ENCODE measurements at regions of chr4 and their contacts with region 1.

Region 1: GRCh38 chr4:44760142-44760898 is 34.0 kb upstream of the GNPDA2 start:
- DNase-seq: peak; percentile 26
- H3K4me3 ChIP-seq: no peak overlapping the region
- H3K27ac ChIP-seq: no peak overlapping the region
- H3K4me1 ChIP-seq: no peaks in the 10 kb centered on the region
- H3K27me3 ChIP-seq: no peaks in the 10 kb centered on the region
- CTCF ChIP-seq: peak; percentile 10 to 20
- POLR2A ChIP-seq: no peak

Region 2: GRCh38 chr4:44132526-44132925 is 627.8 kb before region 1 on chr4:
- CTCF ChIA-PET with region 1: no interaction called
- POLR2A ChIA-PET with region 1: no interaction called
- dilution Hi-C with region 1: no loop called
- intact Hi-C with region 1: no loop called
- DNase-seq: no peak
- H3K4me3 ChIP-seq: no peak overlapping the region
- H3K27ac ChIP-seq: no peak overlapping the region
- H3K4me1 ChIP-seq: no peaks in the 10 kb centered on the region
- H3K27me3 ChIP-seq: no peaks in the 10 kb centered on the region
- CTCF ChIP-seq: no peak
- POLR2A ChIP-seq: no peak

Region 3: DNA sequence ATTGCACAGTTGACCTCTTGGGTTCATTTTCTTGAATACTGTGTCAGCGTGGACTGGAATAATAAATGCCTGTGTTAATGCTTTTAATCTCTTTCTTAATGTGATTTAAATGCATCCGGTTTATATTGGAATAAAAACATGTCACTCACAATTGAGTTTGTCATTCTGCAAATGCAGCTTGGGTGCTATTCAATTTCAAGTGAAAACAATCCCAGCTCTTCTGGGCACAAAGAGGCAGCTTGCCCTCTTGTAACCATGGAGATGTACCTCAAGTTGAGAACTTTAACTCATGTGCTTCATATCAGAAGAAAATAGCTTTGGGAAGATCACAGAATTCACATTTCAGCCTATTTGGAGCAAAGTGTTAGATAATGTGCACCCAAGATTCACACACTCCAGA is 321.8 kb after region 1 on chr4:
- CTCF ChIA-PET with region 1: no interaction called
- POLR2A ChIA-PET with region 1: no interaction called
- dilution Hi-C with region 1: no loop called
- intact Hi-C with region 1: no loop called
- DNase-seq: no peak
- H3K4me3 ChIP-seq: no peak overlapping the region
- H3K27ac ChIP-seq: no peak overlapping the region
- H3K4me1 ChIP-seq: no peaks in the 10 kb centered on the region
- H3K27me3 ChIP-seq: no peaks in the 10 kb centered on the region
- CTCF ChIP-seq: no peak
- POLR2A ChIP-seq: no peak

Region 4: GRCh38 chr4:46270986-46271596 is 1510.8 kb after region 1 on chr4:
- CTCF ChIA-PET with region 1: no interaction called
- POLR2A ChIA-PET with region 1: no interaction called
- dilution Hi-C with region 1: no loop called
- intact Hi-C with region 1: loop called (anchors 5 kb)
- DNase-seq: no peak
- H3K4me3 ChIP-seq: no peak overlapping the region
- H3K27ac ChIP-seq: no peak overlapping the region
- H3K4me1 ChIP-seq: no peaks in the 10 kb centered on the region
- H3K27me3 ChIP-seq: no peaks in the 10 kb centered on the region
- CTCF ChIP-seq: no peak
- POLR2A ChIP-seq: no peak

Region 5: DNA sequence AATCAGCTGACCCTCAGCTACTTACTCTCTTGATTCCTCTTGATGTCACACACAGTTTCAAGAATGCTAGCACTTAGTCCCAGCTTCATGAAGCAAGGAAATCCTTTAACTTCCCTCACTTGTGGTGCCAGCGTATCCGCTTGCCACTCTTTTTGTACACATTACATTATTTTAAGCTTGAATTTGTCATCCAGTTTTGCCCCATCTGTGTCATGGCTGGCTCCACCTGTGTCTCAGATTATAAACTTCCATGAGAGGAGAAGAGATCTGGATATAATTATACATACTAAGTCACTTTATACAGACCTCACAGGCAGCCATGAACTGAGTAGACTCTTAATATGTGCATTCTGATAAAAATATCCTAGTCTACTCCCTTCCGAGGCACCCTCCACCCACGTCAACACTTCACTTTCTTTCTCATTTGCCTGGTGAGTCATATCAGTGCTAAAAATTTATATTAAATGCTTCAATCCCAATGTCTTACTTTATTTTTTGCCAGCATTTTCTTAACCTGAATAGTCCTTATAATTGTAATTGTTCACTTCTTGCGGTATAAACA is 1594.5 kb after region 1 on chr4:
- CTCF ChIA-PET with region 1: no interaction called
- POLR2A ChIA-PET with region 1: no interaction called
- dilution Hi-C with region 1: no loop called
- intact Hi-C with region 1: loop called (anchors 10 kb)
- DNase-seq: no peak
- H3K4me3 ChIP-seq: no peak overlapping the region
- H3K27ac ChIP-seq: no peak overlapping the region
- H3K4me1 ChIP-seq: no peaks in the 10 kb centered on the region
- H3K27me3 ChIP-seq: no peaks in the 10 kb centered on the region
- CTCF ChIP-seq: no peak
- POLR2A ChIP-seq: no peak